Naive thymus-derived CD4-positive, alpha-beta T cell (primary cell): ENCODE measurements at regions of chr18 and their contacts with region 1.

Region 1: DNA sequence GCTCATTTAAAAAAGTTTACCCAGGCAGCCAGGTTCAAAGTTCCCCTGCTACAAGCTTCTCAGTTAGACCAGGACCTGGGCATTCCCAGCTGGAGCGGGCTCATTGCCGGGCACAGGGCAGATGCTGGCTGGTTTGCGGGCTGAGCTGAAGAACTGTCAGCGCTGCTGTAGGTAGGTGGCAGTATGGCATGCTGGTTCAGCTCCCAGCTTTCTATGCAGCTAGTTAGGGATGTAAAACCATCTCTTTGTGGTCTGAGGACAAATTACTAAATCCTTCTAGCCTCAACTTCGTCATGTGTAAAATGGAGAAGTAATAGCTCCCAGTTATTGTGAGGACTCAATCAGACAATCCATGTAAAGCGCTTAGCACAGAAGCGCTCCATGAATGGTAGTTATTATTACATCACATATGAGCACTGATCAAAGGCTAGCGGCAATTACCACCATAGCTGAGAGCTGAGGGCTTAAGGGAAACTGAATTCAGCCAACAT is 2.4 kb upstream of the LDLRAD4 start:
- DNase-seq: peak; percentile 20 to 72 (median 62)
- ATAC-seq: peak; percentile 75
- H3K4me3 ChIP-seq: peak overlapping the region; percentile 48
- H3K4me3 Mint-ChIP-seq: peak overlapping the region; percentile 87 to 99 (median 94)
- H3K27ac ChIP-seq: peak overlapping the region; percentile 60
- H3K27ac Mint-ChIP-seq: peak overlapping the region in 8 of 9 donors; percentile 76 to 96 (median 88)
- H3K4me1 ChIP-seq: peaks cover 5 to 16% of the 10 kb centered on the region in 2 donors
- H3K4me1 Mint-ChIP-seq: peaks cover 14 to 38% (median 35%) of the 10 kb centered on the region in 7 donors
- H3K27me3 ChIP-seq: no peaks in the 10 kb centered on the region
- H3K27me3 Mint-ChIP-seq: peaks cover 0 to 50% (median 6%) of the 10 kb centered on the region in 5 donors

Region 2: GRCh38 chr18:13260197-13260934 is 44.2 kb after region 1 on chr18:
- CTCF ChIA-PET with region 1: no interaction called
- POLR2A ChIA-PET with region 1: no interaction called
- intact Hi-C with region 1: loop called in 1 of 2 experiments (anchors 2 kb)
- DNase-seq: no peak
- ATAC-seq: peak; percentile 48
- H3K4me3 ChIP-seq: no peak overlapping the region
- H3K4me3 Mint-ChIP-seq: peak overlapping the region in 8 of 10 donors; percentile 1 to 59 (median 29)
- H3K27ac ChIP-seq: no peak overlapping the region
- H3K27ac Mint-ChIP-seq: peak overlapping the region in 4 of 9 donors; percentile 32 to 73 (median 58)
- H3K4me1 ChIP-seq: peaks cover 2 to 25% of the 10 kb centered on the region in 2 donors
- H3K4me1 Mint-ChIP-seq: peaks cover 21 to 44% (median 30%) of the 10 kb centered on the region in 7 donors
- H3K27me3 ChIP-seq: no peaks in the 10 kb centered on the region
- H3K27me3 Mint-ChIP-seq: peaks cover 0 to 4% (median 0%) of the 10 kb centered on the region in 5 donors

Region 3: GRCh38 chr18:13375302-13376255 is 159.4 kb after region 1 on chr18:
- CTCF ChIA-PET with region 1: interaction called, 9 read pairs
- POLR2A ChIA-PET with region 1: interaction called, 7 read pairs
- intact Hi-C with region 1: loop called (anchors 1 kb)
- DNase-seq: peak in 7 of 9 donors; percentile 29 to 81 (median 54)
- ATAC-seq: peak; percentile 77
- H3K4me3 ChIP-seq: peak overlapping the region; percentile 34
- H3K4me3 Mint-ChIP-seq: peak overlapping the region; percentile 56 to 86 (median 78)
- H3K27ac ChIP-seq: peak overlapping the region; percentile 83
- H3K27ac Mint-ChIP-seq: peak overlapping the region; percentile 92 to 99 (median 96)
- H3K4me1 ChIP-seq: peaks cover 10 to 64% of the 10 kb centered on the region in 2 donors
- H3K4me1 Mint-ChIP-seq: peaks cover 32 to 85% (median 77%) of the 10 kb centered on the region in 7 donors
- H3K27me3 ChIP-seq: no peaks in the 10 kb centered on the region
- H3K27me3 Mint-ChIP-seq: no peaks in the 10 kb centered on the region

Region 4: DNA sequence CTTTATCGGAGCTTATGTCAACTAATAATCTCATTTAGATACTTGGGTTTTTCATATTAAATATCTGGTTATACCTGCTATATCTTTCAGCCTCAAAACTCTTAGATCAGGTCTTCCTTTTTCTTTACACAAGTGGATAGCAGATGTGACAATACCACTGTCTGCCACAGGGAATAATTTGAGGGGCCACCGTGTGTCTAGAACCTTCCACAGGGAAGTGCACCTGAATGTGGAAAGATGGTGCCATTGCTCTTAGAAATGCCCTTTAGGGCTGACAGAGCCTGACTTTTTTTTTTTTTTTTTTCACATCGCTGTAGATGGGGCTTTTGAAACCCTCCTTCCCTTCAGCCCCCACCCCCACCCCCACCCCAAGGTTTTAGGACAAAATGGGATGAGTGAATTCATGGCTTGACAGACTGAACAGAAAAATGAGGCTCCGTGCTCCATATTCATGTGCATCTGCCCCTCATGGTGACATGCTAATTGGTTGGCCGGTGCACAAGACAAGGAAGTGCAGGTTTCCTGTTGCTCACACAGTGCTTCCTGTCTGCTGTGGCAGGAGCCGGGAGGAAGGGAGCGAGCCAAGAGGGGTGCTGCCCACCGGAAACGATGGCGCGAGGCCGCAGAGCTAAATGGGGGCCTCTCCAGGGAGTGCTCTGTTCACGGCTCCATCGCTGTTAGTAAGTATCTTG is 248.4 kb after region 1 on chr18:
- CTCF ChIA-PET with region 1: interaction called, 9 read pairs
- POLR2A ChIA-PET with region 1: no interaction called
- intact Hi-C with region 1: loop called (anchors 1 kb)
- DNase-seq: peak; percentile 37 to 70 (median 64)
- ATAC-seq: peak; percentile 93
- H3K4me3 ChIP-seq: peak overlapping the region; percentile 66
- H3K4me3 Mint-ChIP-seq: peak overlapping the region; percentile 87 to 100 (median 94)
- H3K27ac ChIP-seq: peak overlapping the region; percentile 66
- H3K27ac Mint-ChIP-seq: peak overlapping the region; percentile 88 to 99 (median 95)
- H3K4me1 ChIP-seq: peaks cover 16 to 45% of the 10 kb centered on the region in 2 donors
- H3K4me1 Mint-ChIP-seq: peaks cover 43 to 85% (median 83%) of the 10 kb centered on the region in 7 donors
- H3K27me3 ChIP-seq: no peaks in the 10 kb centered on the region
- H3K27me3 Mint-ChIP-seq: no peaks in the 10 kb centered on the region

Region 5: DNA sequence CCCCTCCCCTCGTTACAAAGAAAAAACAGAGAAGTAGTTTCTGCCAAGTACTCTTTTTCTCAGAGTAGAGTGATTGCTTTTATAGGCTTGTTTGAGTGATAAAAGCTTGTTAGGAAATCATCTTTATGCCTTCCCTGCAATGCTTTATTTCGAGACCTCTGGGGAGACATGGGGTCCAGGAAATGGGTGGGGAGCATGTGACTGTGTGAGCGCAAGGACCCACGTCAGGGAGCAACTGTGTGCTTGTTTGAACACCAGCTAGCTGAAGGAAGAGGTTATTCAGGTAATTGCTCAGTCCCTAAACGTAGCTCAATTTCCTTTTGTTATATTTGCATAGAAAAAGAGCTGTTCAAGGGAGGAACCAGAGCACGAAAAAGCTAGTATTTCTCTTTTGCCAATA is 322.9 kb after region 1 on chr18:
- CTCF ChIA-PET with region 1: interaction called, 6 read pairs
- POLR2A ChIA-PET with region 1: interaction called, 5 read pairs
- intact Hi-C with region 1: loop called (anchors 1 to 2 kb)
- DNase-seq: peak in 7 of 9 donors; percentile 68 to 86 (median 79)
- ATAC-seq: peak; percentile 92
- H3K4me3 ChIP-seq: no peak overlapping the region
- H3K4me3 Mint-ChIP-seq: peak overlapping the region; percentile 70 to 85 (median 74)
- H3K27ac ChIP-seq: peak overlapping the region; percentile 66
- H3K27ac Mint-ChIP-seq: peak overlapping the region; percentile 64 to 97 (median 90)
- H3K4me1 ChIP-seq: peaks cover 11 to 36% of the 10 kb centered on the region in 2 donors
- H3K4me1 Mint-ChIP-seq: peaks cover 28 to 80% (median 70%) of the 10 kb centered on the region in 7 donors
- H3K27me3 ChIP-seq: no peaks in the 10 kb centered on the region
- H3K27me3 Mint-ChIP-seq: no peaks in the 10 kb centered on the region

Region 6: GRCh38 chr18:13726232-13726971 is 510.3 kb after region 1 on chr18 and contains the starts of genes FAM210A and RNMT:
- CTCF ChIA-PET with region 1: interaction called, 10 read pairs
- POLR2A ChIA-PET with region 1: interaction called, 7 read pairs
- intact Hi-C with region 1: loop called (anchors 1 kb)
- DNase-seq: peak; percentile 82 to 95 (median 93)
- ATAC-seq: peak; percentile 96
- H3K4me3 ChIP-seq: peak within 1 kb of the TSS; percentile 95
- H3K4me3 Mint-ChIP-seq: peak within 1 kb of the TSS; percentile 85 to 97 (median 90)
- H3K27ac ChIP-seq: peak within 1 kb of the TSS; percentile 98
- H3K27ac Mint-ChIP-seq: peak within 1 kb of the TSS; percentile 82 to 99 (median 96)
- H3K4me1 ChIP-seq: peaks cover 17 to 38% of the 10 kb centered on the region in 2 donors
- H3K4me1 Mint-ChIP-seq: peaks cover 43 to 69% (median 60%) of the 10 kb centered on the region in 7 donors
- H3K27me3 ChIP-seq: no peaks in the 10 kb centered on the region
- H3K27me3 Mint-ChIP-seq: no peaks in the 10 kb centered on the region
- total RNA-seq, gene FAM210A: 5.9 to 31.5 (median 8.1) TPM
- total RNA-seq, gene RNMT: 47.0 to 101 (median 53.7) TPM